Activated B cell treated with CpG ODN at 0.5 μM for 24 hours (primary cell): ENCODE measurements at regions of chr16 and their contacts with region 1.

Region 1: DNA sequence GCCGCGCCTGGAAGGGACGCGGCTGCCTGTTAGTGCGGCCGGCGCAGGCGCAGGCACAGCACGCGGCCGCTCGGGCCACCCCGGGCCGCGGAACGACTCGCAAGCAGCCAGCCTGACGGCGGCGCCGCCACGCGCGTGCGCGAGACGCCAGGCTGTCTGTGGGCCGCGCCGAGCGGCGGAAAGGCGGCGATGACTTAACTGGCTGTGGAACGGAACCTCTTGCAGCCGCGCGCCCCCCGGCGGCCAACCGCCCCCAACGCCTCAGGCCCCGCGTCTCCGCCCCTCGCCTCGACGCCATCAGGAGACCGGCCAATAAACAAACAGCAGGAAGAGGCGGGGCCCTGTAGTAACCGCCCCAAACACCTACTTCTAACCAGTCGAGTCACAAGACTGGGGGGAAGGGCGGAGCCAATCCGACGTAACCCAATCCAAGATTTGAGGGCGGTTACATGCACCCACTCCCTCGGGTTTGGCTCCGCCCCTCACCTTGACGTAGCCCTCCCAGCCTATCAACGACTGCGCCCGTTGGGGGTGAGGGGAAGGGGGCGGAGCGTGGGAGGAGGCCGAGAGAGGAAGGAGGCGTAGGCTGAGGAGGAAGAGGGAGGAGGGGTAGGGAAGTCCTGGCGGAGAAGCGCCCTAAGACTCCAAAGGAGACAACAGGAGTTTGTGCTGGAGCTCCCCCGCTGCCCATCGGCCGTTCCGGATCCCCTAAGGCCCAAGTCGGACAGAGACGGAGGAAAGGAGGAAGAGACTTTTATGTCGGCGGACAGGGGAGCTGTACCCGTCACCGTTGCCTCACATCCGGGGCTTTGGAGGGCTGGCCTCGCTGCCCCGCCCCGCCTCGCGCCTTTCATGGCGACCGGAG is at the start of gene FBRS:
- DNase-seq: peak; percentile 99
- ATAC-seq: peak; percentile 73
- H3K4me3 Mint-ChIP-seq: peak within 1 kb of the TSS; percentile 98
- H3K27ac Mint-ChIP-seq: peak within 1 kb of the TSS; percentile 100
- H3K4me1 Mint-ChIP-seq: peaks cover 37% of the 10 kb centered on the region
- H3K27me3 Mint-ChIP-seq: no peaks in the 10 kb centered on the region
- CTCF ChIP-seq: no peak
- total RNA-seq, gene FBRS: 166 and 204 TPM in 2 replicates

Region 2: GRCh38 chr16:30065143-30065850 is 592.8 kb before region 1 on chr16 and contains the start of gene ALDOA:
- CTCF ChIA-PET with region 1: no interaction called
- POLR2A ChIA-PET with region 1: interaction called, 9 read pairs
- intact Hi-C with region 1: loop called (anchors 10 kb)
- DNase-seq: peak; percentile 91
- ATAC-seq: peak; percentile 86
- H3K4me3 Mint-ChIP-seq: peak within 1 kb of the TSS; percentile 99
- H3K27ac Mint-ChIP-seq: peak within 1 kb of the TSS; percentile 99
- H3K4me1 Mint-ChIP-seq: peaks cover 35% of the 10 kb centered on the region
- H3K27me3 Mint-ChIP-seq: no peaks in the 10 kb centered on the region
- CTCF ChIP-seq: no peak
- total RNA-seq, gene ALDOA: 611 and 613 TPM in 2 replicates

Region 3: DNA sequence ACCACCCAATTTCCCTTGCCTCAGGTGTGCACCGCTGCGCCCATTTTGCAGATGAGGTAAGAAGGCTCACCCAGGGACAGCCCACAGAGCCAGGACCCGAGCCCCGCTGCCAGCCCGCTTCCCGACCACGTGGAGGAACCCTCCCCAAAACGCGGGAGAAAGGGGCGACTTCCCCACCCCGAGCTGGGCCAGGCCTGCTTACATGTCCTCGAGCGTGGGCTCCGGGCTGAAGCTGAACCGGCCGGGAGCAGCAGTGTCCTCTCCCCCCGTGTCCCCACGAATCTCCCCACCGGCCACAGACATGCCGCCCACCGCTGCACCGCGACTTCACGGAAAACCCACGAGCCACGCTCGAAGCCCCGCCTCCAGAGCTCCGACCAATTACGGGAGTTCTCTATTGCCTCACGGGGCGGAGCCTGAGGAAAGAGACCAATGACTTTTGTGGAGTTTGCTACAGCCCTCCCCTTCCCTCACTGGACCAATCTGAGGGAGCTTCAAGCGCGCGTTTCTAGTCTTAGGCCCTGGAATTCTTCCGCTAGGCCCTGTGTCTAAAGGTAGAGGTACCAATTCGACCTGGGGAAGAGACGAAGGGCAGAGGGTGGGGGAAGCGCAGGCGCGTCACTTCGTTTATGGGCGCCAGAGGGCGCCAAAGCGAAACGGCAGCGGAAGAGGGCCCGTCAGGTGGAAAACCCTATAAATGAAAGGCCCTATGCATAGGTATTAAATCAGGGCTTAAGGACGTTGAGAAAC is 228.2 kb before region 1 on chr16 and contains the start of gene DCTPP1:
- CTCF ChIA-PET with region 1: interaction called, 5 read pairs
- POLR2A ChIA-PET with region 1: interaction called, 10 read pairs
- intact Hi-C with region 1: loop called (anchors 1 kb)
- DNase-seq: peak; percentile 86
- ATAC-seq: peak; percentile 97
- H3K4me3 Mint-ChIP-seq: no peak within 1 kb of the TSS
- H3K27ac Mint-ChIP-seq: no peak within 1 kb of the TSS
- H3K4me1 Mint-ChIP-seq: peaks cover 2% of the 10 kb centered on the region
- H3K27me3 Mint-ChIP-seq: no peaks in the 10 kb centered on the region
- CTCF ChIP-seq: no peak
- total RNA-seq, gene DCTPP1: 66.7 and 81.5 TPM in 2 replicates

Region 4: GRCh38 chr16:30557957-30558788 is 99.9 kb before region 1 on chr16 and contains the start of gene ZNF764:
- CTCF ChIA-PET with region 1: no interaction called
- POLR2A ChIA-PET with region 1: interaction called, 6 read pairs
- intact Hi-C with region 1: loop called (anchors 1 kb)
- DNase-seq: peak; percentile 91
- ATAC-seq: peak; percentile 93
- H3K4me3 Mint-ChIP-seq: peak within 1 kb of the TSS; percentile 83
- H3K27ac Mint-ChIP-seq: peak within 1 kb of the TSS; percentile 84
- H3K4me1 Mint-ChIP-seq: peaks cover 43% of the 10 kb centered on the region
- H3K27me3 Mint-ChIP-seq: no peaks in the 10 kb centered on the region
- CTCF ChIP-seq: no peak
- total RNA-seq, gene ZNF764: 16.1 and 19.2 TPM in 2 replicates

Region 5: DNA sequence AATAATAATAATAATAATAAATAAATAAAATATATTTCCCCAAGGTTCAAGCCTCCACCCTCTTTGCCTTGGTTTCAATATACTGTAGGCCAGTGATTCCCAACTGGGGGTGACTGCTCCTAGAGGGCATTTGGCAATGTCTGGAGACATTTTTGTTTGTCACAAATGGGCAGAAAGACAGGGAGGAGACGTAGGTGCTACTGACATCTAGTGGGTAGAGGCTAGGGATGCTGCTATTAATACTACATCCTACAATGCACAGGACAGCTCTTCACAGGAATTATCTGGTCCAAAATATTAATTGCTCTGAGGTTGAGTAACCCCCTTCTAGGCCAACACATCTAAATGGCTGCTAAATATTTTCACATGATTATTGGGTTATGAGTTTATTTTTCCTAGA is 20.2 kb before region 1 on chr16:
- CTCF ChIA-PET with region 1: interaction called, 4 read pairs
- POLR2A ChIA-PET with region 1: interaction called, 65 read pairs
- intact Hi-C with region 1: loop called (anchors 1 kb)
- DNase-seq: no peak
- ATAC-seq: no peak
- H3K4me3 Mint-ChIP-seq: no peak overlapping the region
- H3K27ac Mint-ChIP-seq: no peak overlapping the region
- H3K4me1 Mint-ChIP-seq: peaks cover 21% of the 10 kb centered on the region
- H3K27me3 Mint-ChIP-seq: no peaks in the 10 kb centered on the region
- CTCF ChIP-seq: no peak

Region 6: GRCh38 chr16:30761928-30762810 is 104.1 kb after region 1 on chr16 and contains the starts of genes CFAP119 and RNF40:
- CTCF ChIA-PET with region 1: no interaction called
- POLR2A ChIA-PET with region 1: no interaction called
- intact Hi-C with region 1: loop called (anchors 2 kb)
- DNase-seq: peak; percentile 94
- ATAC-seq: peak; percentile 89
- H3K4me3 Mint-ChIP-seq: peak within 1 kb of the TSS; percentile 93
- H3K27ac Mint-ChIP-seq: peak within 1 kb of the TSS; percentile 87
- H3K4me1 Mint-ChIP-seq: peaks cover 42% of the 10 kb centered on the region
- H3K27me3 Mint-ChIP-seq: no peaks in the 10 kb centered on the region
- CTCF ChIP-seq: no peak
- total RNA-seq, gene CFAP119: 6.2 and 8.8 TPM in 2 replicates
- total RNA-seq, gene RNF40: 99.6 and 117 TPM in 2 replicates

Region 7: DNA sequence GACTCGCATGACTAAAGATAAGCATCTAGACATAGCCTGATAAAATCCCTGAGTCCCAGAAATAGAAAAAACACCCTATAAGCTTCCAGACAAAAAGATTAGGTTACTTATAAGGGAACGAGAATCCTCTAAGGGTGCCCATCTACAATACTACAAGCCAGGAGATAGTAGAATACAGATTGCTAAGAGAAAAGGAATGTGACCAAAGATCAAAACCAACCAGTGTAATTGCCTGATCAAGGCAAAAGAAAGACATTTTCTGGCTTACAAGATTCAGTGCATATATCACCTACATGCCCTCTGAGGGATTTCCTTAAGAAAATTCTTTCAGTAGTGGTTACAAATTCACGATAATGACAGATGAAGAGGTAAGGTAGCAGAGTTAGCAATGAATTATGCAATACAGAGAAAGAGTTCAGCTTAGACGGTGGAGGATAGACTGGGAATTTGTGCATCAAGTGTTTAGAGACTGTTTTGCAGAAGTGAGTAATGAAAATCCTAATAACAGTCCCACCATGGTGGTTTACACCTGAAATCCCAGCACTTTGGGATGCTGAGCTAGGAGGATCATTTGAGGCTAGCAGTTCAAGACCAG is 200.8 kb after region 1 on chr16:
- CTCF ChIA-PET with region 1: no interaction called
- POLR2A ChIA-PET with region 1: no interaction called
- intact Hi-C with region 1: no loop called
- DNase-seq: no peak
- ATAC-seq: no peak
- H3K4me3 Mint-ChIP-seq: no peak overlapping the region
- H3K27ac Mint-ChIP-seq: no peak overlapping the region
- H3K4me1 Mint-ChIP-seq: no peaks in the 10 kb centered on the region
- H3K27me3 Mint-ChIP-seq: no peaks in the 10 kb centered on the region
- CTCF ChIP-seq: no peak